CD4-positive, alpha-beta T cell (primary cell): ENCODE measurements at regions of chr7 and their contacts with region 1.

Region 1: DNA sequence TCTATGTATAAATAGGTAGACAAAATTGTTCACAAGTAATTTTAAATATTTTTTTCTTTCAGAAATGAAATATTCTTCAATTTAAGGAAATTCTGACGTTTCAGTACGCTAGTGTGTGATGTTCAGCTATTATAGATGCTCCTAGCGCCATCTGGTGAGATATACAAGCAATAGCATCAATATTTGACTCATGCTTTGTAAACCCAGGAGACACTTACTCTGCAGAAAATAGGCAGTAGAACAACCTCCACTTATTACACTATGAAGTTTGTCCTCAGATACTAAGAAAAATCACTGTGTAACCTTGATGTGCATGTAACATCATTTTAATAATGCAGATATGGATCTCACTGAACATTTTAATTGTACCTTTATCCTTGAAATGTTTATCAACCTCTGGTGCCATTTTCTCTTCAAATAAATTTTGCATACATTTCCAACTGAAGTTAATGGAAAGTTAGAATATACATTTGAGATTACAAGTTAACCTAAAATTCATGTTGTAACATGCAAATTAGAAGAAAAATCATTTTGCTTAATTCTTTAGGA is 151.5 kb upstream of the FAM3C start:
- DNase-seq: peak in 4 of 14 experiments; percentile 11 to 73 (median 66)
- ATAC-seq: peak; percentile 79
- H3K4me3 ChIP-seq: no peak overlapping the region
- H3K4me3 Mint-ChIP-seq: no peak overlapping the region
- H3K27ac ChIP-seq: no peak overlapping the region
- H3K27ac Mint-ChIP-seq: no peak overlapping the region
- H3K4me1 ChIP-seq: no peaks in the 10 kb centered on the region
- H3K4me1 Mint-ChIP-seq: no peaks in the 10 kb centered on the region
- H3K27me3 ChIP-seq: no peaks in the 10 kb centered on the region
- H3K27me3 Mint-ChIP-seq: no peaks in the 10 kb centered on the region
- CTCF ChIP-seq: peak; percentile 84

Region 2: GRCh38 chr7:120987683-120988590 is 559.7 kb before region 1 on chr7:
- CTCF ChIA-PET with region 1: no interaction called
- POLR2A ChIA-PET with region 1: no interaction called
- intact Hi-C with region 1: loop called in 1 of 2 experiments (anchors 5 kb)
- DNase-seq: peak; percentile 77 to 94 (median 83)
- ATAC-seq: peak; percentile 100
- H3K4me3 ChIP-seq: peak overlapping the region; percentile 10
- H3K4me3 Mint-ChIP-seq: peak overlapping the region; percentile 44
- H3K27ac ChIP-seq: no peak overlapping the region
- H3K27ac Mint-ChIP-seq: no peak overlapping the region
- H3K4me1 ChIP-seq: peaks cover 20% of the 10 kb centered on the region
- H3K4me1 Mint-ChIP-seq: peaks cover 26% of the 10 kb centered on the region
- H3K27me3 ChIP-seq: peaks cover 25 to 52% of the 10 kb centered on the region in 2 experiments
- H3K27me3 Mint-ChIP-seq: peaks cover 75% of the 10 kb centered on the region
- CTCF ChIP-seq: peak; percentile 95

Region 3: DNA sequence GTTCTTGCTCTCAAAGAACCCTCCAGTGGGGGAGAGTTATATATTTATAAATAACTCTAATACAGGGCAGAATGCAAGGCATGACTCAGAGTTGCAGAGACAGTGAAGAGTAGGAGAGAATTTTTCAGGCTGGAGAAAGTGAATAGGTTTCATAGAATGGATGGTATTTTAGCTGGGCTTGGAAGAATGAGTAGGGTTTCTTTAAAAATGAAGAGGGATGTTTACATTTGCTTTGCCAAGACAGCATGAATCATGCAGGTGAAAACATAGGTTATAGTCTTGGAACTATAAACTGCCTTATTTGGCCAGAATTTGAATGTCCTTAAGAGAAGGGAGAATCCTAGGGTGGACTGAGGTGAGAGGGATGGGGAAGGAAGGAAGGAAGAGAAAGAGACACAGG is 434.3 kb before region 1 on chr7:
- CTCF ChIA-PET with region 1: no interaction called
- POLR2A ChIA-PET with region 1: no interaction called
- intact Hi-C with region 1: loop called in 1 of 2 experiments (anchors 5 kb)
- DNase-seq: no peak
- ATAC-seq: no peak
- H3K4me3 ChIP-seq: no peak overlapping the region
- H3K4me3 Mint-ChIP-seq: no peak overlapping the region
- H3K27ac ChIP-seq: no peak overlapping the region
- H3K27ac Mint-ChIP-seq: no peak overlapping the region
- H3K4me1 ChIP-seq: no peaks in the 10 kb centered on the region
- H3K4me1 Mint-ChIP-seq: no peaks in the 10 kb centered on the region
- H3K27me3 ChIP-seq: no peaks in the 10 kb centered on the region
- H3K27me3 Mint-ChIP-seq: peaks cover 10% of the 10 kb centered on the region
- CTCF ChIP-seq: no peak

Region 4: DNA sequence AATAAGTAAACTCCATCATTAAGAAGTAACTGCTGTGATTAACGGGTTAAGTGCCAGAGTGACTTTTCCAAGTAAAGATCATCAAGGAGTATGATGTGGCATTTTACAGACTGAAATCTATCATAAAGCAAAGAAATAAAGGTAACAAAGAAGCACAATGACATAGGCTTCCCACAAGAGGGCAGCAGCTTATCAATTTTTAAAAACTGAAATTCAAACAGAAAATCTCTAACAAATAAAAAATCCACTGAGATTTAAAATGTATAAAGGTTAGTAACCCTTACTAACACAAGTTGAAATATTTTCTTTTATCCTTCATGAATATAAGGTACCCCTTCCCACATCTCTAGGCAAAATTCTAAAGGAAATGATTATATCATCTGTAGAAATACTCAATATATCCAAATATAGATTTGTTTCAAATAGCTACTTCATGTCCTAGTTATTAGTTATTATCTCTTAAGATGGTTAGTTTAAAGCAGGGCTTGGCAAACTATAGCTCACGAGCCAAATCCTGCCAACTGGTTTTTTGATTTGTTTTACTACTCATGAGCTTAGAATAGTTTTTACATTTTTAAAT is 180.7 kb before region 1 on chr7:
- CTCF ChIA-PET with region 1: interaction called, 33 read pairs
- POLR2A ChIA-PET with region 1: interaction called, 11 read pairs
- intact Hi-C with region 1: loop called (anchors 1 kb)
- DNase-seq: peak in 4 of 14 experiments; percentile 60 to 71 (median 64)
- ATAC-seq: peak; percentile 32
- H3K4me3 ChIP-seq: no peak overlapping the region
- H3K4me3 Mint-ChIP-seq: no peak overlapping the region
- H3K27ac ChIP-seq: no peak overlapping the region
- H3K27ac Mint-ChIP-seq: no peak overlapping the region
- H3K4me1 ChIP-seq: no peaks in the 10 kb centered on the region
- H3K4me1 Mint-ChIP-seq: no peaks in the 10 kb centered on the region
- H3K27me3 ChIP-seq: no peaks in the 10 kb centered on the region
- H3K27me3 Mint-ChIP-seq: no peaks in the 10 kb centered on the region
- CTCF ChIP-seq: peak; percentile 87

Region 5: GRCh38 chr7:121410829-121411596 is 136.6 kb before region 1 on chr7:
- CTCF ChIA-PET with region 1: no interaction called
- POLR2A ChIA-PET with region 1: no interaction called
- intact Hi-C with region 1: loop called in 1 of 2 experiments (anchors 5 kb)
- DNase-seq: no peak
- ATAC-seq: no peak
- H3K4me3 ChIP-seq: no peak overlapping the region
- H3K4me3 Mint-ChIP-seq: no peak overlapping the region
- H3K27ac ChIP-seq: no peak overlapping the region
- H3K27ac Mint-ChIP-seq: no peak overlapping the region
- H3K4me1 ChIP-seq: no peaks in the 10 kb centered on the region
- H3K4me1 Mint-ChIP-seq: no peaks in the 10 kb centered on the region
- H3K27me3 ChIP-seq: no peaks in the 10 kb centered on the region
- H3K27me3 Mint-ChIP-seq: peaks cover 23% of the 10 kb centered on the region
- CTCF ChIP-seq: no peak

Region 6: GRCh38 chr7:121433780-121434179 is 113.8 kb before region 1 on chr7:
- CTCF ChIA-PET with region 1: no interaction called
- POLR2A ChIA-PET with region 1: no interaction called
- intact Hi-C with region 1: loop called in 1 of 2 experiments (anchors 5 kb)
- DNase-seq: no peak
- ATAC-seq: no peak
- H3K4me3 ChIP-seq: no peak overlapping the region
- H3K4me3 Mint-ChIP-seq: no peak overlapping the region
- H3K27ac ChIP-seq: no peak overlapping the region
- H3K27ac Mint-ChIP-seq: no peak overlapping the region
- H3K4me1 ChIP-seq: peaks cover 12% of the 10 kb centered on the region
- H3K4me1 Mint-ChIP-seq: peaks cover 12% of the 10 kb centered on the region
- H3K27me3 ChIP-seq: no peaks in the 10 kb centered on the region
- H3K27me3 Mint-ChIP-seq: no peaks in the 10 kb centered on the region
- CTCF ChIP-seq: no peak

Region 7: DNA sequence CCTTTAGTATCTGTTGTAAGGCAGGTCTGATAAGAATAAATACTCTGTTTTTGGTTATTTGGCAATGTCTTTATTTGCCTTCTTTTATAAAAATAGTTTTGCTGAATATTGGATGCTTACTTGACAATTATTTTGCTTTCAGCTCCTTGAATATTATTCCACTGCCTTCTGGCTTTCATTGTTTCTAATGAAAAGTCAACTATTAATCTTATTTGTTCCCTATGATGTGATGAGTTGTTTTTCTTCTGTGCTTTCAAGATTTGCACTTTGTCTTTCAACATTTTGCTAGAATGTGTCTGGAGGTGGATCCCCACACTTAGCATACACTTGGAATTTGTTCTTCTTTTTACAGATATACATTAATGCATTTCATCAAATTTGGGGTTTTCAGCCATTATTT is 121.5 kb after region 1 on chr7:
- CTCF ChIA-PET with region 1: no interaction called
- POLR2A ChIA-PET with region 1: no interaction called
- intact Hi-C with region 1: no loop called
- DNase-seq: no peak
- ATAC-seq: no peak
- H3K4me3 ChIP-seq: no peak overlapping the region
- H3K4me3 Mint-ChIP-seq: no peak overlapping the region
- H3K27ac ChIP-seq: no peak overlapping the region
- H3K27ac Mint-ChIP-seq: no peak overlapping the region
- H3K4me1 ChIP-seq: no peaks in the 10 kb centered on the region
- H3K4me1 Mint-ChIP-seq: no peaks in the 10 kb centered on the region
- H3K27me3 ChIP-seq: no peaks in the 10 kb centered on the region
- H3K27me3 Mint-ChIP-seq: no peaks in the 10 kb centered on the region
- CTCF ChIP-seq: no peak